ENCODE measurements at regions of chr7 and their contacts with region 1.

Region 1: GRCh38 chr7:110786328-110786965 is 304.5 kb upstream of the LRRN3 start:
- DNase-seq: no peak
- ATAC-seq: no peak
- H3K4me3 ChIP-seq: no peak overlapping the region
- H3K4me3 Mint-ChIP-seq: no peak overlapping the region
- H3K27ac ChIP-seq: no peak overlapping the region
- H3K27ac Mint-ChIP-seq: no peak overlapping the region
- H3K4me1 ChIP-seq: no peaks in the 10 kb centered on the region
- H3K4me1 Mint-ChIP-seq: peaks cover 0 to 8% (median 0%) of the 10 kb centered on the region in 7 donors
- H3K27me3 ChIP-seq: no peaks in the 10 kb centered on the region
- H3K27me3 Mint-ChIP-seq: peaks cover 0 to 11% (median 0%) of the 10 kb centered on the region in 5 donors

Region 2: DNA sequence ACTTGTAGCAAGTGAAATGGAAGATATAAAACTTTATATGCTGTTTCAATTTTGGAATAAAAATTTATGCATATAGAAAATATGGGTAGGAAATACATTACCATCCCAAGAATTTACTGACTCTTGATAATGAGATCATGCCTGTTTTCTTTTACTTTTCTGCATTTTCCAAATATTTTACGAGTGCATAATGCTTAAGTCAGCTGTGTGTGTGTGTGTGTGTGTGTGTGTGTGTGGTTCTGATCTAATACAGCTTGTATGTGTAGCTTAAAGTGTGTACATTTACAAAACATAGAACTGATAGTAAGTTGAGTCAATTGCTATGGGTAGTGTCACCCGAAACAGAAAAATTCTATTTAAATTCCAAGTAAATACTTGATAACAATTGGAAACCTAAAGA is 11.4 kb before region 1 on chr7:
- CTCF ChIA-PET with region 1: no interaction called
- POLR2A ChIA-PET with region 1: interaction called, 3 read pairs
- intact Hi-C with region 1: loop called in 1 of 2 experiments (anchors 1 kb)
- DNase-seq: no peak
- ATAC-seq: no peak
- H3K4me3 ChIP-seq: no peak overlapping the region
- H3K4me3 Mint-ChIP-seq: no peak overlapping the region
- H3K27ac ChIP-seq: no peak overlapping the region
- H3K27ac Mint-ChIP-seq: no peak overlapping the region
- H3K4me1 ChIP-seq: no peaks in the 10 kb centered on the region
- H3K4me1 Mint-ChIP-seq: peaks cover 0 to 6% (median 0%) of the 10 kb centered on the region in 7 donors
- H3K27me3 ChIP-seq: no peaks in the 10 kb centered on the region
- H3K27me3 Mint-ChIP-seq: no peaks in the 10 kb centered on the region